ENCODE measurements at regions of chr6 and their contacts with region 1.

Region 1: GRCh38 chr6:36027501-36028087 is at the start of gene MAPK14:
- DNase-seq: peak; percentile 99
- H3K4me3 ChIP-seq: peak within 1 kb of the TSS; percentile 79 to 98 (median 93)
- H3K27ac ChIP-seq: peak within 1 kb of the TSS; percentile 92 to 94 (median 94)
- H3K4me1 ChIP-seq: peaks cover 15 to 44% (median 17%) of the 10 kb centered on the region in 3 donors
- H3K27me3 ChIP-seq: peaks cover 0 to 15% (median 0%) of the 10 kb centered on the region in 4 donors
- CTCF ChIP-seq: peak; percentile 80 to 98 (median 96)
- POLR2A ChIP-seq: peak in 3 of 4 donors; percentile 90 to 98 (median 97)
- total RNA-seq, gene MAPK14: 44.4 to 91.7 (median 59.1) TPM

Region 2: DNA sequence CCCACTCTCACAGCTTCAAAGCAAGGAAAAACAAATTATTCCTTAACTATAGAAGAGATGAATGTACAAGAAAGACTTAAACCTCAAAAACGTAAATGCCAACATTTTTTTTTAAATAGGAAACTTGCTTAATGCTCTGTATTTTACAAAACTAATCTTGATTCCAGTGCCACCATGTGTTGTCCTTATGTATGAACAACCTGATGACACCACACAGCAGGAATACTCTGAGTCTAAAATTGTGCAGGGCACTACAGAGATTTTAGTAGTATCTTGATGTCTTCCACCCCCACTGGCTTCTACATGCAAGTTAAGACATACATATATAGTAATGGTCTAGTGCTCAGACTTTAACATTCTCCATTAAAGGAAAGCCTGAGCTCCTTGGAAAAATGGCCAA is 152.9 kb before region 1 on chr6:
- intact Hi-C with region 1: no loop called
- DNase-seq: no peak
- H3K4me3 ChIP-seq: no peak overlapping the region
- H3K27ac ChIP-seq: no peak overlapping the region
- H3K4me1 ChIP-seq: peaks cover 0 to 13% (median 0%) of the 10 kb centered on the region in 3 donors
- H3K27me3 ChIP-seq: no peaks in the 10 kb centered on the region
- CTCF ChIP-seq: no peak
- POLR2A ChIP-seq: no peak

Region 3: DNA sequence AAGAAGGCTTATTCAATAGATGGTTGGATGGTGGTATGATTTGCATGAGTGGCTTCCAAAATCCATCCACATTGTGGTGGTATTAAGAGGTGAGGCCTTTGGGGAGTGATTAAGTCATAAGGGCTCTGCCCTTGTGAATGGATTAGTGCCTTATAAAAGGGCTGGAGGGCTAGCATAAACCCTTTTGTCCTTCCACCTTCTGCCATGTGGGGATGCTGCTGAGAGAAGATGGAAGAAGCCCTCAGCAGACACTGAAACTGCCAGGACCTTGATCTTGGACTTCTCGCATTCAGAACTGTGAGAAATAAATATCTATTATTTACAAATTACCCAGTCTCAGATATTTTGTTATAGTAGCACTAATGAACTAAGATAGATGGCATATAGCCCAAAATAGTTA is 78.9 kb before region 1 on chr6:
- intact Hi-C with region 1: no loop called
- DNase-seq: no peak
- H3K4me3 ChIP-seq: no peak overlapping the region
- H3K27ac ChIP-seq: no peak overlapping the region
- H3K4me1 ChIP-seq: peaks cover 0 to 6% (median 0%) of the 10 kb centered on the region in 3 donors
- H3K27me3 ChIP-seq: no peaks in the 10 kb centered on the region
- CTCF ChIP-seq: no peak
- POLR2A ChIP-seq: no peak

Region 4: DNA sequence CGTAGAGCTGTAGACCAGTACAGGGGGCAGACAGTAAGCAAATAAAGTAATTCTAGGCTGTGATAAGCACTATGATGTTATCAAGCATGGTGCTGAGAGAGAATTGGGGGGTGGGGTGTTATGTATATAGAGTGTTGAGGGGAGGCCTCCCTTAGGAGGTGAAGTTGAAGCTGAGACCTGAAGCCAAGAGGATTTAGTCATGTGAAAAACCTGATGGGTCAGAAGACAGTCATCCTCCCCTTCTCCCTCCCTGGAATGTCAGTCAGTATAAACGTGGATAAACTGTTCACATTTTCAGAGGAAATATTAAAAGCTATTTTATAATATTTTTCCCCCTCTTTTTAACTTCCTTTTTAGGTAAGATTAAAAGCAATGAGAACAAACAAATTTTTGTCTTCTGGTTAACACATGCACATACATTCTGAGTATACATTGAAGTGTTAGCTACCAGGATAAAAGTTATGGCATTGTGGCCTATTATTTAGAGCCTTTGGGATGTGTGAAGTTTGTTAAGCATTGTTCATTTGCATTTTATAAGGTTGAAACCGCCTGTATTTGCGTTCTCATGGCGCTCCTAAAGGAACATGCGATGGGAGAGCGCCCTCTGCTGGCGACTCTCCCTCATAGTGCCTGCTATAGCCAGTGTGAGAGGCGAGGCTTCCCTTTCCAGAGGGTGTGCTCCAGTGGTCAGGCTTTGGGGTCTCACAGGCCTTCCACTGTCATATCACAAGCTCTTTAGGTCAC is 67.3 kb after region 1 on chr6:
- intact Hi-C with region 1: loop called (anchors 2 kb)
- DNase-seq: peak; percentile 14
- H3K4me3 ChIP-seq: no peak overlapping the region
- H3K27ac ChIP-seq: peak overlapping the region; percentile 6 to 79 (median 55)
- H3K4me1 ChIP-seq: peaks cover 0 to 18% (median 0%) of the 10 kb centered on the region in 3 donors
- H3K27me3 ChIP-seq: no peaks in the 10 kb centered on the region
- CTCF ChIP-seq: peak; percentile 95 to 98 (median 96)
- POLR2A ChIP-seq: no peak

Region 5: DNA sequence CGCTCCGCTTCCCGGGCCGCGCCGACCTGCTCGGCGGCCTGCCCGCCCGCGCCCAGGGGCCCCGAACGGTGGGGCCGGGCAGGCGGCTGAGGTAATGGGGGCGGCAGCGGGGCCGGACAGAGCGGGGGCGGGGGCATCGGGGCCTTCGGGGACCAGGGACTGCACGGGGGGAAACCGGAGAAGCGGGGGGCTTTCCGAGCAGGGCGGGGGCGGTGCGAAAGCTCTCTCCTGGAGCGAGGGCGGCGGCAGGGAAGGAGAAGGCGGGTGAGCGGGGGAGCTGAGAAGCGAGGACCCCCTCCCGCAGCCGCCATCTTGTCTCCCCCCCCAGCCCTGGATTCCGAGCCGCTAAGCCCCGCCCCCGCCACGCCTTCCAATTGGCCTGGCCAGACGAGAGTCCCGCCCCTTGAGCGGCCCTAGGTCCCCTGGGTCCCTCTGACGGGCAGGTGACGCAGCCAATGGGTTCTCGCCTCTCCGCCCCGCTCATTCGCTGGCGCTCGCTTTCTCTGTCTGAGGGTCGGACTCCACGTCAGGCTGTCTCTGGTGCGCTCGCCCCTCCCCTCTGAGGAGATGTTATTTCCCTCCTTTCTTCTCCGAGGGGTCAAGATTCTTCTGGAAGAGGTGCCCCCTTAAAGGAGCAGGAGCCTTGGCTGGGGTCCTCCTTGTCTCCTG is 169.4 kb after region 1 on chr6:
- intact Hi-C with region 1: loop called (anchors 10 kb)
- DNase-seq: peak; percentile 86
- H3K4me3 ChIP-seq: peak overlapping the region; percentile 80 to 97 (median 90)
- H3K27ac ChIP-seq: peak overlapping the region; percentile 97 to 99 (median 98)
- H3K4me1 ChIP-seq: peaks cover 9 to 41% (median 18%) of the 10 kb centered on the region in 3 donors
- H3K27me3 ChIP-seq: no peaks in the 10 kb centered on the region
- CTCF ChIP-seq: no peak
- POLR2A ChIP-seq: peak in 2 of 4 donors; percentile 18 to 75